ENCODE measurements at regions of chr12 and their contacts with region 1.

Region 1: GRCh38 chr12:117105902-117106301 is 6.7 kb upstream of the TESC start:
- DNase-seq: no peak

Region 2: GRCh38 chr12:117019866-117020265 is 86.0 kb before region 1 on chr12:
- in situ Hi-C with region 1: loop called (anchors 5 kb)
- DNase-seq: no peak

Region 3: GRCh38 chr12:117279606-117280005 is 173.7 kb after region 1 on chr12:
- in situ Hi-C with region 1: no loop called
- DNase-seq: peak; percentile 35